Left cardiac atrium (tissue), 4 donors: ENCODE measurements at regions of chr18 and their contacts with region 1.

Region 1: GRCh38 chr18:839224-840022 is 27.4 kb upstream of the YES1 start:
- DNase-seq: peak; percentile 89
- ATAC-seq: peak; percentile 94 to 96

Region 2: DNA sequence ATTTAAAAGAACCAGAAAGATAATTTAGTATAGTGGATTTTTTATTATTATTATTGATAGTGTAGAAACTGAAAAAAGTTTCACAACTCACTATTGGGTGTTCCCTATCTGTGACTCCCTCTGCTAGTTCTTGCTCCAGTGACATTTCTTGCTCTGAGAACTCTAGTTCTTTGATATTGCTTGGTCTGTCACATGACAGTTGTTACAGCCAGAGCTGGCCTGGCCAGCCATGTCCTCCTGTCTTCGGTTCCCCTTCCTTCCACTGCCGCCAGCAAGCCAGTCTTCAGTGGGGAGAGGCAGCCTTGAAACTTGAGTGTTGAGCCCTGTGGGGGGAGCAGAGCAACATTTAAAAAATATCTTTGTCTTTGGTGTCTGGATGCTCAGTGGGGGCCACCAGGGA is 563.9 kb before region 1 on chr18:
- intact Hi-C with region 1: loop called in 1 of 2 experiments (anchors 10 kb)
- DNase-seq: no peak
- ATAC-seq: peak in 1 of 2 donors; percentile 19